Activated CD4-positive, alpha-beta memory T cell treated with anti-CD3 and anti-CD28 coated beads for 36 hours (primary cell): ENCODE measurements at regions of chr18 and their contacts with region 1.

Region 1: DNA sequence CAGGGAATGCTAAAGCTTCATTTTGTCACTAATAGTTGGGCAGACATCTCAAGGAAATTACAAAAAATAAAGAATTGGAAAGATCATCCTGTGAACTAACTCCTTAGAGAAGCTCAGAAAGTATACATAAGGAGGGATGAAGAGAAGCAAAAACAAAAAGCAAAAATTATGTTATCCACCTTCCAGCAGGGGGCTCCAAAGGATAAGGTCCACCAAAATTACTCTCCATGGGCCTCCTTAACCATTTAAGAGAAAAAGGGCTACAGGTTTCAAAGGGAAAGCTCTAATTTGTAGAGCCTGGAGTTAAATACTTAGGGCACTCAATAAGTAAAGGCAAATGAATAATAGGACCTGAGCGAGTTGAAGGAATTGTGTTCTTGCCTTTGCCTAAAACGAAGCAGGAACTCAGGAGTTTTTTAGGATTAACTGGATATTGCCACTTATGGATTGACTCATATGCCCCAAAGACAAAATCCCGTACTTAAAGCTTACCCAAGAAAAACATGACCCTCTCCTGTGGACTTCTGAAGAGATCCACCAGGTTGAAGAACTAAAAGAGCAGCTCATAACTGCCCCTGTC is 1167.9 kb downstream of the DSC3 start:
- DNase-seq: no peak
- H3K4me3 Mint-ChIP-seq: no peak overlapping the region
- H3K27ac Mint-ChIP-seq: no peak overlapping the region
- H3K4me1 Mint-ChIP-seq: no peaks in the 10 kb centered on the region
- H3K27me3 Mint-ChIP-seq: no peaks in the 10 kb centered on the region

Region 2: GRCh38 chr18:29681578-29681977 is 193.0 kb before region 1 on chr18:
- CTCF ChIA-PET with region 1: no interaction called
- POLR2A ChIA-PET with region 1: no interaction called
- intact Hi-C with region 1: no loop called
- DNase-seq: no peak
- H3K4me3 Mint-ChIP-seq: no peak overlapping the region
- H3K27ac Mint-ChIP-seq: no peak overlapping the region
- H3K4me1 Mint-ChIP-seq: no peaks in the 10 kb centered on the region
- H3K27me3 Mint-ChIP-seq: no peaks in the 10 kb centered on the region

Region 3: GRCh38 chr18:29780816-29781215 is 93.8 kb before region 1 on chr18:
- CTCF ChIA-PET with region 1: no interaction called
- POLR2A ChIA-PET with region 1: no interaction called
- intact Hi-C with region 1: no loop called
- DNase-seq: no peak
- H3K4me3 Mint-ChIP-seq: no peak overlapping the region
- H3K27ac Mint-ChIP-seq: no peak overlapping the region
- H3K4me1 Mint-ChIP-seq: no peaks in the 10 kb centered on the region
- H3K27me3 Mint-ChIP-seq: no peaks in the 10 kb centered on the region

Region 4: GRCh38 chr18:29823671-29824070 is 50.9 kb before region 1 on chr18:
- CTCF ChIA-PET with region 1: no interaction called
- POLR2A ChIA-PET with region 1: no interaction called
- intact Hi-C with region 1: no loop called
- DNase-seq: no peak
- H3K4me3 Mint-ChIP-seq: no peak overlapping the region
- H3K27ac Mint-ChIP-seq: no peak overlapping the region
- H3K4me1 Mint-ChIP-seq: no peaks in the 10 kb centered on the region
- H3K27me3 Mint-ChIP-seq: no peaks in the 10 kb centered on the region

Region 5: DNA sequence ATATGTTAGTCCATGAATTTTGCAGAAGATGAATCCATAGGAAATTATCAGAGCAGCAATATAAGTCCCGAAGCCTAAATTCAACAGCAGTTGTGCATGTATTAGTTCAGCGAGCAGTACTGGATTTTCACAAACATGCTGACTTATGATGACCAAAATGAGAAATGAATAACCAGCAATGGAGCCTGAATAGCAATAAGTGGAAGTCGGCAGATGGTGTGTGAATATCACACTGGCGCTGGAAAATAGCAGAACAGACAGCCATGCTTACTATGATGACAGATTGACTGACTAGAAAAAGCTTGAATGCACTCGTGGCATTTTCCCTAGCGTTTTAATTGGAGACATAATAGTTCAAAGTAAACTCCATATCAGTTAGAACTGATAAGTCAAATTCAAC is 53.5 kb after region 1 on chr18:
- CTCF ChIA-PET with region 1: no interaction called
- POLR2A ChIA-PET with region 1: no interaction called
- intact Hi-C with region 1: no loop called
- DNase-seq: no peak
- H3K4me3 Mint-ChIP-seq: no peak overlapping the region
- H3K27ac Mint-ChIP-seq: no peak overlapping the region
- H3K4me1 Mint-ChIP-seq: no peaks in the 10 kb centered on the region
- H3K27me3 Mint-ChIP-seq: no peaks in the 10 kb centered on the region

Region 6: DNA sequence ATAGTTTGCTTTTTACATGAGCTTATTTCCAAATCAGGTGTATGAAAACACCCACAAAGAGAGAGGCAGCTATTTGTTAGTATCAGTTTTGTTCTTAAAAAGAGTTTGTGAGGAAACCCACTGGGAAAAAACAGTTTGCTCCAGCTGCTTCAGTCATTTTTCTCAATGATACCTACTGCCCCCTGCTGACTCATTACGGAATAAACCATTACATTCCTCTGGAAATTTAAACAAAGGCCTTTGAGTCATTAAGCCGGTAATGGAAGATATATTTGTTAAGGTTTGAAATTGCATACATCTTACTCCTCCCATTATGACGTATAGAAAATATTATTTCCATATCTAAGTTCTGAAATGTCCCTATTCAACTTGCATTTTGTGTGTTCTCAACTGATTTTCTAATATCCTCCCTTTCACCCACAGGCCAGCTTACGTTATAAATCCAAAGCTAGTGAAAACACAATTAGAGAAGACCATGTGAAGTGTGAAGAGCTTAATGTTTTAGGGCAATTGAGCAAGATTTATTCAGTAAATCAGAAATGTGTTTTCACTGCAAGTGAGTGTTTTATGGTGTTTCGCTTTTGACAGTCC is 406.4 kb after region 1 on chr18:
- CTCF ChIA-PET with region 1: interaction called, 3 read pairs
- POLR2A ChIA-PET with region 1: no interaction called
- intact Hi-C with region 1: loop called (anchors 2 kb)
- DNase-seq: no peak
- H3K4me3 Mint-ChIP-seq: no peak overlapping the region
- H3K27ac Mint-ChIP-seq: no peak overlapping the region
- H3K4me1 Mint-ChIP-seq: no peaks in the 10 kb centered on the region
- H3K27me3 Mint-ChIP-seq: no peaks in the 10 kb centered on the region

Region 7: DNA sequence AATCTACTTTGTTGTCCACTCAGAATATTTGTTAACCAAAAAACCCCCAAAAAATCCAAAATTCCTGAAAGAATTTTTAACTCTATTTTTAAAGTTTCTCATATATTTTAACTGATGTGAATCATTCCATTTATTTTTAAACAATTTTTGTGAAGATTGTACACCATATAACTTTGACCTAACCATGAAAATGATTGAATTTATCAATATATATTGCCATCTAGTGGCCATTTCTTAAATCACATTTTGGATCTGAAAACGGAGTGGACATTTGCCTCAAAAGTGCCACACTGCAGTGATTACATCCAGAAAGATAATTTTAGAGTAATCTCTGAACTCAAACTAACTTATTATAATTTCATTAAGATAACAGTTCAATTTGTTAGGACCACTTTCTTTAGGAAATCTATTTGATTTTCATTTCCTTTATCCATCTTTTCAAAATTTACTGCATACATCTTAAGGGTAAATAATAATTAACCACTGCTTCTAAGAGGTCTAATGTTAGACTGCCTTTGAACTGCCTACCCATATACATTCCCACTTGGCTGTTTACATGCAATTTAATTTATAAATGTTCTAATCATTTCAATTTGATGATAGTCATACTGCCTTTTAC is 1096.8 kb after region 1 on chr18:
- CTCF ChIA-PET with region 1: no interaction called
- POLR2A ChIA-PET with region 1: no interaction called
- intact Hi-C with region 1: loop called (anchors 10 kb)
- DNase-seq: no peak
- H3K4me3 Mint-ChIP-seq: no peak overlapping the region
- H3K27ac Mint-ChIP-seq: no peak overlapping the region
- H3K4me1 Mint-ChIP-seq: no peaks in the 10 kb centered on the region
- H3K27me3 Mint-ChIP-seq: no peaks in the 10 kb centered on the region